Uterus (tissue), 4 donors: ENCODE measurements at regions of chr5 and their contacts with region 1.

Region 1: GRCh38 chr5:59810041-59810440 is 83.5 kb downstream of the PDE4D start:
- DNase-seq: peak; percentile 68
- H3K4me3 ChIP-seq: no peak overlapping the region
- H3K27ac ChIP-seq: no peak overlapping the region
- H3K4me1 ChIP-seq: no peaks in the 10 kb centered on the region
- H3K27me3 ChIP-seq: no peaks in the 10 kb centered on the region
- CTCF ChIP-seq: peak; percentile 71 to 90 (median 79)
- POLR2A ChIP-seq: no peak

Region 2: GRCh38 chr5:59943452-59944113 is 133.5 kb after region 1 on chr5:
- intact Hi-C with region 1: no loop called
- DNase-seq: no peak
- H3K4me3 ChIP-seq: no peak overlapping the region
- H3K27ac ChIP-seq: no peak overlapping the region
- H3K4me1 ChIP-seq: no peaks in the 10 kb centered on the region
- H3K27me3 ChIP-seq: no peaks in the 10 kb centered on the region
- CTCF ChIP-seq: no peak
- POLR2A ChIP-seq: no peak

Region 3: GRCh38 chr5:60207040-60207439 is 397.0 kb after region 1 on chr5:
- intact Hi-C with region 1: no loop called
- DNase-seq: no peak
- H3K4me3 ChIP-seq: no peak overlapping the region
- H3K27ac ChIP-seq: no peak overlapping the region
- H3K4me1 ChIP-seq: no peaks in the 10 kb centered on the region
- H3K27me3 ChIP-seq: no peaks in the 10 kb centered on the region
- CTCF ChIP-seq: no peak
- POLR2A ChIP-seq: no peak

Region 4: DNA sequence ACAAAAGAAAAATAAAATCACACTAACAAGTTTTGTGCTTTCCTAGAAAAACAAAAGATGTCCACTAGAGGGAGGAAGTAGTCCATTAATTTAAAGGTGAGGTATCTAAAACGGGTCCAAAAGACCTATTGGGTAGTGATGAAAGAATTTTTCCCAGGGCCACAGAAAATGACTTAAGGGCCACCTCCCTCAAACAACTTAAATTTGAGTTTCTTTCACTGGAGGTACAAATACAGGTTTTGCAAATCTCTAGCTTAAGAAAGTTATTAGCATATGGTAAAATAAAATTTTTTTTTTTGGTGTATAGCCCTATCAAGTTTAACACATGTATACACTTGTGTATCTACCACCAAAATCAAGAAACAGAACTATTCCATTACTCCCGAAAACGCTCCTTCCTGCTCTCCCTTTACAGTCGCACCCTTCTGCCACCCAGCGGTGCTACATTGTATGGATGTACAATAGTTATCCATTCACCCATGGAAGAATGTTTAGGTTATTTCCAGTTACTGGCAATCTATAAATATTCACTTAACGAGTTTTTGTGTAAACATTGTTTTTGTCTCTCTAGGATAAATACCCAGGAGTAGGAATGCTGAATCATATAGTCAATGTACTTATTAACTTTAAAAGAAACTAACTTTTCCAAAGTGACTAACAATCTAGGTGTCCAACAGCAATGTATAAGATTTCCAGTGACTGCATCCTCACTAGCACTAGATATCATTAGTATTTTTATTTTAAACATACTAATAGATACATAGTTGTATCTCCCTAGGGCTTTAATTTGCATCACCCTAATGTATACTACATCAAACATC is 868.0 kb after region 1 on chr5:
- intact Hi-C with region 1: loop called (anchors 10 kb)
- DNase-seq: no peak
- H3K4me3 ChIP-seq: no peak overlapping the region
- H3K27ac ChIP-seq: no peak overlapping the region
- H3K4me1 ChIP-seq: no peaks in the 10 kb centered on the region
- H3K27me3 ChIP-seq: no peaks in the 10 kb centered on the region
- CTCF ChIP-seq: peak; percentile 21 to 41 (median 28)
- POLR2A ChIP-seq: no peak